HEK293 (cell line): ENCODE measurements at regions of chr9 and their contacts with region 1.

Region 1: DNA sequence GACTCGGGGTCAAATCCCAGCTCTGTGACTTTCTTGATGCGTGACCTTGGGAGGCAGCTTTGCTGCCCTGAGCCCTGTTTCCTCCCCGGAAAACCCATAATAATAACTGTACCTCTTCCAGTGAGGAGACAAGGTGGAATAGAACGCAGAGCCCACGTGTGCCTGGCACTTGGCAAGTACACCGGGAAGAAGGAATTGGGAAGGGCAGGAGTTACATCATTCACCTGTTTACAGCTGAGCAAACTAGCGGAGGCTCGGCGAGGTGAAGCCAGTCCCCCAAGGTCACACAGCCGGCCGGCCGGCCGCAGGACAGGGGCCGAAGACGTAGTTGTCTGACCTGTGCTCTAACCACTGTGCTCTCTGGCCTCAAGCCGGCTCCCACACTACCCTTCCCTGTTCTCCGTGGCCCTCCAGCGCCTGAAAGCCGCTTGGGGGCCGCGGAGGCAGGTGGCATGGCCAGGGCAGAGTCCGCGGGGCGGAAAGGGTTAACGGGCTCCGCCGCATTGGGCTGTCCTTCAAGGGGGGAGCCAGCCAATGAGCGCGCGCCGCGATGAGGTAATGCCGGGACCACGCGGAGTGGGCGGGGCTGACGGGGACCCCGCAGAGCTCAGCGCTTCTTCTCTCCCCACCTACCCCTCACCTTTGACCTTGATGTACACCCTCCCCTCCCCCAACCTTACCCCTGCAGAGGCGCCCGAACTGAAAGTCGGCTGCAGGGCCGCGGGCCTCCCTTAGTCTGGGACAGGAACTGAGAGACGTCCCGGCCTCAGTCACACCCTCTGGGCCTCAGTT is 125.2 kb downstream of the C9orf50 start:
- H3K4me3 ChIP-seq: peak overlapping the region; percentile 25
- H3K27ac ChIP-seq: peak overlapping the region; percentile 87
- H3K4me1 ChIP-seq: 0 out of 2 replicates have a peak, but pooled peaks cover 2% of the 10 kb centered on the region
- CTCF ChIP-seq: no peak

Region 2: DNA sequence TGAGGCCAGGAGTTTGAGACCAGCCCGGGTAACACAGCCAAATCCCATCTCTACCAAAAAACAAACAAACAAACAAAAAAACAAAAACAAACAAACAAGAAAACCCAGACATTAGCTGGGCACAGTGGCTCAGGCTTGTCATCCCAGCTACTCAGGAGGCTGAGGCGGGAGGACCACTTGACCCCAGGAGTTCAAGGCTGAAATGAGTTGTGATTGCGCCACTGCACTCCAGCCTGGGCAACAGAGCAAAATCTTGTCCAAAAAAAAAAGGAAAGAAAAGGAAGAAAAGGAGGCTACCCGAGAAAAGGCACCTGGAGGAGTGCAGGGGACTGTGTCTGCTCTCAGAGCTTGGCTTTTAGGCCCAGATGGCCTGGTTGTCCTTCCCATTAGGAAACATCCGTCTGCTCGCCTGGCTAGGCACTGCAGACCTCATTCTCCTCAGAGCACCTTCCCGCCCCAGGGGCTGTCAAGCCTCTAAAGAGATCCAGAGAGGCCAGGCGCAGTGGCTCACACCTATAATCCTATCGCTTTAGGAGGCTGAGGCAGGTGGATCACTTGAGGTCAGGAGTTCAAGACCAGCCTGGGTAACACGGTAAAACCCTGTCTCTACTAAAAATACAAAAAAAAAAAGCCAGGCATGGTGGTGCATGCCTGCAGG is 132.4 kb before region 1 on chr9:
- CTCF ChIA-PET with region 1: no interaction called
- POLR2A ChIA-PET with region 1: no interaction called
- H3K4me3 ChIP-seq: no peak overlapping the region
- H3K27ac ChIP-seq: no peak overlapping the region
- H3K4me1 ChIP-seq: no peaks in the 10 kb centered on the region
- CTCF ChIP-seq: no peak

Region 3: GRCh38 chr9:129460323-129461261 is 35.1 kb before region 1 on chr9:
- CTCF ChIA-PET with region 1: interaction called, 6 read pairs
- POLR2A ChIA-PET with region 1: interaction called, 56 read pairs
- H3K4me3 ChIP-seq: peak overlapping the region; percentile 36
- H3K27ac ChIP-seq: peak overlapping the region; percentile 88
- H3K4me1 ChIP-seq: peaks cover 20% of the 10 kb centered on the region
- CTCF ChIP-seq: no peak

Region 4: GRCh38 chr9:129472651-129473102 is 23.1 kb before region 1 on chr9:
- CTCF ChIA-PET with region 1: no interaction called
- POLR2A ChIA-PET with region 1: no interaction called
- H3K4me3 ChIP-seq: no peak overlapping the region
- H3K27ac ChIP-seq: no peak overlapping the region
- H3K4me1 ChIP-seq: 0 out of 2 replicates have a peak, but pooled peaks cover 2% of the 10 kb centered on the region
- CTCF ChIP-seq: no peak

Region 5: GRCh38 chr9:129482521-129483414 is 13.0 kb before region 1 on chr9:
- CTCF ChIA-PET with region 1: interaction called, 3 read pairs
- POLR2A ChIA-PET with region 1: interaction called, 46 read pairs
- H3K4me3 ChIP-seq: peak overlapping the region; percentile 29
- H3K27ac ChIP-seq: peak overlapping the region; percentile 87
- H3K4me1 ChIP-seq: no peaks in the 10 kb centered on the region; the same call in 1 of the 2 replicates
- CTCF ChIP-seq: no peak

Region 6: GRCh38 chr9:129509522-129510270 is 14.0 kb after region 1 on chr9:
- CTCF ChIA-PET with region 1: no interaction called
- POLR2A ChIA-PET with region 1: interaction called, 10 read pairs
- H3K4me3 ChIP-seq: no peak overlapping the region
- H3K27ac ChIP-seq: no peak overlapping the region
- H3K4me1 ChIP-seq: no peaks in the 10 kb centered on the region
- CTCF ChIP-seq: no peak

Region 7: GRCh38 chr9:129610473-129611301 is 115.0 kb after region 1 on chr9:
- CTCF ChIA-PET with region 1: interaction called, 4 read pairs
- POLR2A ChIA-PET with region 1: interaction called, 14 read pairs
- H3K4me3 ChIP-seq: peak overlapping the region; percentile 44
- H3K27ac ChIP-seq: peak overlapping the region; percentile 49; the same call in 1 of the 2 replicates
- H3K4me1 ChIP-seq: no peaks in the 10 kb centered on the region; the same call in 1 of the 2 replicates
- CTCF ChIP-seq: peak; percentile 76; the same call in 1 of the 2 replicates